Ascending aorta (tissue), 2 donors: ENCODE measurements at regions of chr14 and their contacts with region 1.

Region 1: DNA sequence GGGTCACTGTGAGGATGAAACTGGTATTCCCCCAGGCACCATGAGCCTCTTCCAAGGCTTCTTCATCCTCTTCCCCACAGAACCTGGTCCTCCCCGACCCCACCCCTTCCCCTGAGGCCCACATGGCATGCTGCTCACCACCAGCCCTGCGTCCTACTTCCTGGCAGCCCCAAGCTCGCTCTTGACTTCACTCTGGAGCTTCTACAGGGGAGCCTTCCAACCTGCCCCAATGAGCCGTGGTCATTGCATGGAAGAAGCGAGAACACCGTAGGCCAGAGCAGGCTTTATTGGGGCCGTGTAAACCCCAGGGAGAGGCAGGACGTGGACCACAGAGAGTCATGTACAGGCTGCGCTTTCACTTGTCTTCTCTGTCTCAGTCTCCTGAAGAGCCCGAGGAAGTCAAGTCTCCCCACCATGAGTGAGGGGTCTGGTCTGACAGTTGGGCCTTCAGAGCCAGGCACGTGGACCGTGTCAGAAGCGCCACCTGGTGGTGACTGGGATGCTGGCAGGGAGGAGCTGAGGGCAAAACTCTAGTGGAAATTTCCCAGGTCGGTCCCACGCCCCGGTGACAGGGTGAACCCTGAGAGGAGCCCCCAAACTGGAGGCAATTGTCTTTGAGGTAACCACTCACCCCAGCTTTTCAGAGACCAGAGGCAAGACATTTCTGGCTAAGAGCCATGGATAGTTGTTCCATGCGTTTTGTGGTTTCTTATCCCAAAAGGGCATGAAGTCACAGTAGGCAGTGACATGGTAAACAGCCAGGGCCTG is 17.5 kb downstream of the RPS6KL1 start:
- DNase-seq: peak in 1 of 2 donors; percentile 85
- H3K4me3 ChIP-seq: no peak overlapping the region
- H3K27ac ChIP-seq: peak overlapping the region in 1 of 2 donors; percentile 8
- H3K4me1 ChIP-seq: no peaks in the 10 kb centered on the region
- H3K27me3 ChIP-seq: no peaks in the 10 kb centered on the region
- CTCF ChIP-seq: peak; percentile 91 to 96 (median 95)

Region 2: DNA sequence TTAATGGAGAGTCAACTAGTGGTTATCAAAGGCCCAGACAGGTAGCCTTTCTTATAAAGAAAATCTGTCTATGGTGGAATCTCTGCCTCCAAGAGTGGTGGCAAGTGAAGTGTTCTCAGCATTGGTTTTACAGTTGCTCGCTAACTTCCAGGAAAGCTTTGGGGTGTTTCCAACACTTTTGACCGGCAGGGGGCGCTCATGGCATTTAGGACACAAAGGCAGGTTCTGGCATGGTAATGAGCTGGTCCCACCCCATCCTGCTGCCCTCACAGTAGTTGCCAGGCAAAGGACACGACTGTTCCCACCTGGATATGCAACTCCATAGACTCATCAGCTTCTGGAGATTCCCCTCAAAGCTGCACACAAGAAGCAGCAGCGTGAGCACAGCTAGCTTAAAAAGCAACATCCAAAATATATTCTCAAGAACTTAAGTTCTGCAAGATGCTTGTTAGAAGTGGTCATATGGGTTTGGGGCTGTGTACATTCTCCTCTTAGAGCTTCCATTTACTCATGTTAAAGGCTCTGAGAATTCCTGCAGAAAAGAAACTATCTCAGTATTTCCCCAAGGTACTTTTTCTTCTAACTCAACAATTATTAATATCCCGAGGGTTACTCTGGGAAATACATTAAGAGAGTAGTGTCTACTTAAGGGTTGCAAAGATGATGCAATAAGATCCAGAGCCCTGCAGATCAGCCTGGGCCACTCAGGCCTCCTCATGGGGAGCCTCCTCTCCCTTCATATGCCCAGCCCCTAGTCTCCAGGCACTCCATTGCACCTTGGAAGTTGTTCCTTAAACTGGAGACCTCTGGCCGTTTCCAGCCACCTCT is 44.4 kb before region 1 on chr14:
- intact Hi-C with region 1: loop called (anchors 1 kb)
- DNase-seq: peak; percentile 51 to 95
- H3K4me3 ChIP-seq: no peak overlapping the region
- H3K27ac ChIP-seq: no peak overlapping the region
- H3K4me1 ChIP-seq: no peaks in the 10 kb centered on the region
- H3K27me3 ChIP-seq: no peaks in the 10 kb centered on the region
- CTCF ChIP-seq: peak; percentile 77 to 81 (median 80)